Activated B cell treated with CpG ODN at 0.5 μM for 24 hours (primary cell): ENCODE measurements at regions of chr12 and their contacts with region 1.

Region 1: DNA sequence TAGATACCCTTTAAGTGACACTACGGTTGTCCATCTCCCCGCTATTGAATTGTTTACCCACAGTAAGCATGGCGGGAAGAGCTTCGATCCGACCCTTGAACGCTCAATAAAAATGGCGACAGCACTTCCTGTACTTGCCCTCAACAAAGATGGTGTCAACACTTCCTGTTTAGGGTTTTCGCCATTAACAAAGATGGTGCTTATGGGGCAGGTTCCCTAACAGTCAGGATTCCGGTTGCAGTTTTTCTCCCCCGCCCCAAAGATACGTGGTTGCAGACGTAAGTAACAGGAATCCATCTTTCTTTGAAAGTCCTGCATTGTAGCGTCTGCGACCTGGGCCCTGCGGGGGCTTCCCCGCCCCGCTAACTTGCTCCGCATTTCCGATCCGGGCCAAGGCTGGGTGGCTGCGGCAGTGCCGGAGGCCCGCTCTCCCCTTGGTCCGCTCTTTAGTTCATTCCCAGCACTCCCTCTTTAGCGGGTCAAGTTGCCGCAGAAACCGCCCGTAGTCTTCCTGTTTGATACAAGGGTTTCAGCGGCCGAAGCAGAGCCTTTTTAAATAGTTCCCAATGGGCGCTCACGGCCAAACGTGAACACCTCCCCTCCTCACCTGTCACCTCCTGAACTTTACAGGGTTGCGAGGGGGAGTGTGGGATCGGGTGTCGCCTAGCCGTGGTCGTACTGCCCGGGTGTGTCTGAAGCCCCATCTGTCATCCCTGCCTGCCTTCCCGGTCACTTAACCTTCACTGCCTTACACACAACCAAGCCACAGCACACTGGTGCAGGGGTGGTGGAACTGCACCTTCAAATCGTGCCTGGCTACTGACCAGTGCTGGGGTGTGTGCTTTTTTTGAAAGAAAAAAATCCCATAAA is at the start of gene CRADD:
- DNase-seq: peak; percentile 72
- ATAC-seq: peak; percentile 94
- H3K4me3 Mint-ChIP-seq: peak within 1 kb of the TSS; percentile 99
- H3K27ac Mint-ChIP-seq: peak within 1 kb of the TSS; percentile 100
- H3K4me1 Mint-ChIP-seq: peaks cover 23% of the 10 kb centered on the region
- H3K27me3 Mint-ChIP-seq: peaks cover 12% of the 10 kb centered on the region
- CTCF ChIP-seq: no peak
- total RNA-seq, gene CRADD: 10.3 and 15.3 TPM in 2 replicates

Region 2: GRCh38 chr12:92928962-92929915 is 748.2 kb before region 1 on chr12 and contains the start of gene EEA1:
- CTCF ChIA-PET with region 1: no interaction called
- POLR2A ChIA-PET with region 1: interaction called, 3 read pairs
- intact Hi-C with region 1: loop called (anchors 1 kb)
- DNase-seq: peak; percentile 91
- ATAC-seq: peak; percentile 84
- H3K4me3 Mint-ChIP-seq: peak within 1 kb of the TSS; percentile 89
- H3K27ac Mint-ChIP-seq: peak within 1 kb of the TSS; percentile 96
- H3K4me1 Mint-ChIP-seq: peaks cover 32% of the 10 kb centered on the region
- H3K27me3 Mint-ChIP-seq: no peaks in the 10 kb centered on the region
- CTCF ChIP-seq: no peak
- total RNA-seq, gene EEA1: 21.3 and 22.6 TPM in 2 replicates

Region 3: GRCh38 chr12:93467351-93468007 is 210.0 kb before region 1 on chr12 and contains the start of gene MRPL42:
- CTCF ChIA-PET with region 1: no interaction called
- POLR2A ChIA-PET with region 1: no interaction called
- intact Hi-C with region 1: loop called (anchors 1 kb)
- DNase-seq: peak; percentile 93
- ATAC-seq: peak; percentile 92
- H3K4me3 Mint-ChIP-seq: peak within 1 kb of the TSS; percentile 95
- H3K27ac Mint-ChIP-seq: peak within 1 kb of the TSS; percentile 94
- H3K4me1 Mint-ChIP-seq: peaks cover 23% of the 10 kb centered on the region
- H3K27me3 Mint-ChIP-seq: no peaks in the 10 kb centered on the region
- CTCF ChIP-seq: no peak
- total RNA-seq, gene MRPL42: 40.9 and 44.6 TPM in 2 replicates

Region 4: DNA sequence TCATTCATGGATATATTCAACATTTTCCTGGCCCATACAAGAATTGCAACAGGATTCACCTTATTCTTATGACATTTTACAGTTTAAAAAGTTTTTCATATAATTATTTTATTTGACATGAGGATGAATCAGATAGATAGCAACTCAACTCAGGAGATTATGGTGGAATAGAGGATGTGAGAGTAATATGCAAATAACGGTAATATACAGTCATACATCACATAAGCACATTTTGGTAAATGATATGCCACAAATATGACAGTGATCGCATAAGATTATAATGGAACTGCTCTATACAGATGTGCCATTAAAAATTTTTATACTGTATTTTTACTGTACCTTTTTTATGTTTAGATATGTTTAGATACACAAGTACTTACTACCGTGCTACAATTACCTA is 24.4 kb before region 1 on chr12:
- CTCF ChIA-PET with region 1: no interaction called
- POLR2A ChIA-PET with region 1: interaction called, 4 read pairs
- intact Hi-C with region 1: loop called (anchors 1 kb)
- DNase-seq: no peak
- ATAC-seq: peak; percentile 89
- H3K4me3 Mint-ChIP-seq: no peak overlapping the region
- H3K27ac Mint-ChIP-seq: no peak overlapping the region
- H3K4me1 Mint-ChIP-seq: peaks cover 3% of the 10 kb centered on the region
- H3K27me3 Mint-ChIP-seq: no peaks in the 10 kb centered on the region
- CTCF ChIP-seq: no peak

Region 5: GRCh38 chr12:93847517-93848474 is 170.4 kb after region 1 on chr12:
- CTCF ChIA-PET with region 1: no interaction called
- POLR2A ChIA-PET with region 1: no interaction called
- intact Hi-C with region 1: loop called (anchors 5 kb)
- DNase-seq: no peak
- ATAC-seq: peak; percentile 54
- H3K4me3 Mint-ChIP-seq: peak overlapping the region; percentile 32
- H3K27ac Mint-ChIP-seq: peak overlapping the region; percentile 70
- H3K4me1 Mint-ChIP-seq: peaks cover 24% of the 10 kb centered on the region
- H3K27me3 Mint-ChIP-seq: no peaks in the 10 kb centered on the region
- CTCF ChIP-seq: no peak

Region 6: DNA sequence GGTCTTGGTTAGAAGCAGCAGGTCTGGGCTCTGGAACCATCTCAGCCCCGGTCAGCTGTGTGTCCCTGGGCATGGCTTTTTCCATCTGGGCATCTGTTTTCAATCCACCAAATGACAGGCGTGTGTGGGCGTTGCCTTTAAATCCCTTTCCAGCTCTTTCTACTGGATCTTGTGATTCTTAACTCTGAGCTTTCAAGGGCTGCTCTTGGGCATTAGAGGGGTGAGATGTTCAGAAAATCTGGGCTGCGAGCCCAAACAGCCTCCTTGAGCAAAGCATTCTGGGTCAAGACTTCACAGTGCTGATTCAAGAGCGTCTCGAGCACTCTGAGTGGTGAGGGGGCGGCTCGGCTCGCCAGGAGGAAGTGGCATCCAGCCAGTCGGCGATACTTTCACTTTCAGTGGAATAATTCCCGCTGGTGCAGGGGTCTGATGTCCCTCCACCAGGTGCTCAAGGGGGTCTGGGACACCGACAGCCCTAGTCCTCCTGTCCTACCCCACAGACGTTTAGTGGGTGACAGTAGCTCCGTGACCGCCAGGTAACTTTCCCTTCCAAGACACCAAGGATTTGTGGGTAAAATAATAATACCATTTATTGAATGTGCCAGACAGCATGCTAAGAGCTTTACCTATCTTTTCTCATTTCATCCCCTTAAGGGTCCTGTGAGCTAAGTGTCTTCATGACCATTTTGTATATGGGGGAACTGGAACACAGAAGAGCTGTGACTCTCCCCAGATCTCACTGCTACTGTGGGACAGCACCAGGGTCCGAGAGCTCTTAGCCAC is 585.0 kb after region 1 on chr12:
- CTCF ChIA-PET with region 1: no interaction called
- POLR2A ChIA-PET with region 1: no interaction called
- intact Hi-C with region 1: loop called (anchors 10 kb)
- DNase-seq: peak; percentile 63
- ATAC-seq: peak; percentile 82
- H3K4me3 Mint-ChIP-seq: peak overlapping the region; percentile 97
- H3K27ac Mint-ChIP-seq: peak overlapping the region; percentile 99
- H3K4me1 Mint-ChIP-seq: peaks cover 64% of the 10 kb centered on the region
- H3K27me3 Mint-ChIP-seq: no peaks in the 10 kb centered on the region
- CTCF ChIP-seq: no peak

Region 7: GRCh38 chr12:95217377-95218149 is 1540.1 kb after region 1 on chr12 and contains the starts of genes FGD6 and VEZT:
- CTCF ChIA-PET with region 1: no interaction called
- POLR2A ChIA-PET with region 1: no interaction called
- intact Hi-C with region 1: loop called (anchors 2 kb)
- DNase-seq: peak; percentile 92
- ATAC-seq: peak; percentile 92
- H3K4me3 Mint-ChIP-seq: peak within 1 kb of the TSS; percentile 96
- H3K27ac Mint-ChIP-seq: peak within 1 kb of the TSS; percentile 95
- H3K4me1 Mint-ChIP-seq: peaks cover 42% of the 10 kb centered on the region
- H3K27me3 Mint-ChIP-seq: no peaks in the 10 kb centered on the region
- CTCF ChIP-seq: no peak
- total RNA-seq, gene FGD6: 3.7 and 5.4 TPM in 2 replicates
- total RNA-seq, gene VEZT: 47.2 and 58.7 TPM in 2 replicates